ENCODE measurements at regions of chr1 and their contacts with region 1.

Region 1: DNA sequence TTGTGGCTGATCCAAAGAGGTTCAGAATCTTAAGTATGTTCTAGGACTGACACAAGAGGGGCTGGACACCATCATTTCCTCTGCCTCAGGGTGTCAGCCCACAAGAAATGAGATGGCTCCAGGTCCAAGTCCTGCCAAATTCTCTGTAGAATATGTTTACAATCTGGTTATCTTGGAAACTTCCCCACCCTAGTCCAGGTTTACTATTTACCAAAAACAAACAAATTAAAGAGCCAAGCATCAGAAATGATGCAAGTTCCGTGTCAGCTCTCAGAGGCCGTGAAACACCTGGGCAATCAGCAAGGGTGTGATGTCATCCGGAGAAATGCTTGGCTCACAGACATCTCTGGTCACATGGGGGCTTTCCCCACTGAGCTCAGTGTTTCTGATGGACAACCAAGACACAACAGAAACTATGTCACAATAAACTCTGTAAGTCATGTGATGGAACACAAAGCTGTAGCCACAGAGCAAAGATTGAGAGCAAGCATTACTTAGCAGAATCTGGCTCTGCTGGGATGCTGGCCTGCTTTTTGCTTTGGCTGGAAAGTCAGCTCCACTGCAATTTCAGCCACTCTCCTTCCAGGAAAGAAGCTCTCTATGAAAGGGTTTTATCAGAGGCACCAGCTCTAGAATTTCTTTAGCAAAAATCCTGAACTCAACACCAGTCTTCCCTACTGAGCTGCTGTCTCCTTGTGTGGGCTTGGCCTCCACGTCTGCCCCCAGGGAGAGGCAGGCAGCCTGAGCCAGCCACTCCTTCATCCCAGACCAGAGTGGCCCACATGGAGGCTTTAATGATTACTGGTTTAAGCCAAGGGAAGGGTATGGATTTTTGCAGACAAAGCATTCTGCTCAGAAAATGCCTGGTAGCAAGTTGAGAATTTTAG is 55.9 kb downstream of the NENF start:
- DNase-seq: peak in 1 of 2 donors; percentile 46
- ATAC-seq: peak; percentile 44 to 80 (median 58)
- H3K4me3 ChIP-seq: no peak overlapping the region
- H3K27ac ChIP-seq: peak overlapping the region in 1 of 10 donors; percentile 77
- H3K4me1 ChIP-seq: peaks cover 0 to 45% (median 13%) of the 10 kb centered on the region in 9 donors
- H3K27me3 ChIP-seq: no peaks in the 10 kb centered on the region
- CTCF ChIP-seq: no peak

Region 2: GRCh38 chr1:212558693-212559480 is 70.2 kb after region 1 on chr1:
- intact Hi-C with region 1: loop called in 3 of 10 experiments (anchors 10 kb)
- DNase-seq: peak; percentile 94
- ATAC-seq: peak; percentile 93 to 98 (median 96)
- H3K4me3 ChIP-seq: peak overlapping the region; percentile 49 to 96 (median 73)
- H3K27ac ChIP-seq: peak overlapping the region; percentile 85 to 99 (median 98)
- H3K4me1 ChIP-seq: peaks cover 0 to 26% (median 13%) of the 10 kb centered on the region in 9 donors
- H3K27me3 ChIP-seq: no peaks in the 10 kb centered on the region
- CTCF ChIP-seq: no peak

Region 3: GRCh38 chr1:212566522-212567479 is 78.2 kb after region 1 on chr1:
- intact Hi-C with region 1: loop called in 1 of 10 experiments (anchors 10 kb)
- DNase-seq: peak in 1 of 2 donors; percentile 39
- ATAC-seq: peak; percentile 72 to 93 (median 86)
- H3K4me3 ChIP-seq: peak overlapping the region; percentile 5 to 64 (median 53)
- H3K27ac ChIP-seq: peak overlapping the region; percentile 5 to 89 (median 80)
- H3K4me1 ChIP-seq: peaks cover 0 to 19% (median 13%) of the 10 kb centered on the region in 9 donors
- H3K27me3 ChIP-seq: no peaks in the 10 kb centered on the region
- CTCF ChIP-seq: peak in 3 of 9 donors; percentile 6 to 10 (median 8)

Region 4: DNA sequence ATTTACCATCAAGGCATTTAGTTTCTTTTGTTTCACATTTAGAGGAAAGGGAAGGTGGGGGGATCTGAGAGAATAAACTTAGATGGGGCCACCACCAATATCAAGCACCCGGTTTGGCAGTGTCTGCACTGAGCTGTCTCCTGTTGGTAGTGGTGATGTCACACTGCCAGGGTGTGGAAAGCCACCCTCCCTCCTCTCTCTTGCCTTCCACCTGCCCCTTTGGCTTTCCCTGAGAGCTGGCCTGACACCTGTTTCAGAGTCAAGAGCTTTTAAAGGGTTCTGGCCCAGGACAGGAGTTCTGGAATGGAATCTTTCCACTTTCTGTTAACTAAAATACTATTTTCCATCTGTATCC is 133.3 kb after region 1 on chr1:
- intact Hi-C with region 1: loop called in 1 of 10 experiments (anchors 10 kb)
- DNase-seq: no peak
- ATAC-seq: peak in 1 of 8 donors; percentile 34
- H3K4me3 ChIP-seq: no peak overlapping the region
- H3K27ac ChIP-seq: peak overlapping the region in 1 of 10 donors; percentile 6
- H3K4me1 ChIP-seq: peaks cover 0 to 4% (median 0%) of the 10 kb centered on the region in 9 donors
- H3K27me3 ChIP-seq: no peaks in the 10 kb centered on the region
- CTCF ChIP-seq: no peak